ENCODE measurements at regions of chr4 and their contacts with region 1.

Region 1: DNA sequence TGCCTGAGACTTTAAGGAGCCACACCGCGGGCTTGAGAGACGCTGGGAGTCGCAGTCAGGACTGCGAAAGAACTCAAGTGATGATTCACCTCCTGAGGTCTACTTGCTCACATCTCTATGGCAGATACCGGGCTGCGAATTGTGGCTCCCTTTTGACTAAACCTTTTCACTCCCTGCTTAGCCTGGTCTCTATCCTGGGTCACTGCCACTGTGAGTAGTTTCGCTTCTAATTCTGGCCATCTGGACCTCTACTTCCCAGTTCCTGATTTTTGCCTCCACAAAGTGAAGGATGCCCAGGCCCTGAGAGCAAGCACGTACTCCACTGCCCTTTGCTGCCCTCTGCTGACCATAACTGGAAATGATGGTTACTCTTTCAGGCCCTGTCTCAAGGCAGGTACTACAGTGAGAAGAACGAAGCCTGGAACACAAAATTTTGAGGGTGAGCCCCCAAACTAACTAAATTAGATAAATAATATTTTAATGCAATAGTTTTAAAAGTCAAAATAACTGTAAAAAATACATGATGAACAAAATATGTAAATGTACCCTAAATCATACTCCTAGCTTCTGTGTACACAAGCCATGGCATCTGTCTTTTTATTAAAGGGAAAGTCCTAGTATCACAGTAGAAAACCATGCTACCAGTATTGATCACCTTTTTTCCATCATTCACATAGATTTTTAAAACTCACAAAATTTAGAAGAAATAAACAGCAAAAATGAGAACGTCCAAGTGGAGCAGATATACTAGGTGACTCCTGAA is 16.7 kb downstream of the MAD2L1 start:
- DNase-seq: peak; percentile 47 to 85
- ATAC-seq: peak; percentile 94 to 99 (median 99)
- H3K4me3 ChIP-seq: no peak overlapping the region
- H3K4me3 Mint-ChIP-seq: peak overlapping the region; percentile 58
- H3K27ac ChIP-seq: no peak overlapping the region
- H3K27ac Mint-ChIP-seq: peak overlapping the region in 1 of 2 donors; percentile 65
- H3K4me1 ChIP-seq: peaks cover 5% of the 10 kb centered on the region
- H3K4me1 Mint-ChIP-seq: peaks cover 5% of the 10 kb centered on the region in 2 donors
- H3K27me3 ChIP-seq: no peaks in the 10 kb centered on the region
- H3K27me3 Mint-ChIP-seq: no peaks in the 10 kb centered on the region
- CTCF ChIP-seq: peak; percentile 91

Region 2: DNA sequence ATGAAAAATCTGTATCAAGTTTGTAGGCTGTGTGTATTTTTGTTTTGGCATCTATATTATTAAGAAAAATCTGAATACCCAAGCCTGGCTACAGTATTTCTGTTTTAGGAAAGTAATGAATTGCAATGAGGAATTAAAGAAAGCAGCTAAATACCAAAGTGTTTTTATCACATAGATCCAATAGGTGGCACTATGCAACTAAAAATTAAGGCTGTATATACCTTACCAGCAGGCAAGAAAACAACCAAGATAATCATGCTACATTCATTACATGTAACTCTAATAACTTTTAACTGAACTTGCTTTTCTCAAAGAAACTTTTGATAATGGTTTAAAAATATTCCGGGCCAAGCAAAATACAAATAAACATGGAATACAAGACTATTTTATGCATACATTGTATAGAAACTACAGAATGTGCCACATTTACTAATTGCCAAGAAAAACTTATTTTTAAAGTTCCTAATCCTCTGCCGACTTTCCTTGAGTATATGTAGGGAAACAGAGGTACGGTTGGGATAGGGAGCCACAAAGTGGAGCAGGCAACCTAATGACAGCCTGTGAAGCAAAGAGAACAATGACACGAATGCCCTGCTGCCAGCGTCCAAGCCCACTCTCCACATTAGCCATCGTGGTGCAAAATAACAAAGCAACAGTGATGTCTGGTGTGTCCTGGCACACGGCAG is 1277.7 kb before region 1 on chr4:
- intact Hi-C with region 1: loop called (anchors 2 kb)
- DNase-seq: peak in 1 of 2 donors; percentile 66
- ATAC-seq: peak; percentile 69 to 74 (median 74)
- H3K4me3 ChIP-seq: no peak overlapping the region
- H3K4me3 Mint-ChIP-seq: no peak overlapping the region
- H3K27ac ChIP-seq: no peak overlapping the region
- H3K27ac Mint-ChIP-seq: no peak overlapping the region
- H3K4me1 ChIP-seq: no peaks in the 10 kb centered on the region
- H3K4me1 Mint-ChIP-seq: no peaks in the 10 kb centered on the region
- H3K27me3 ChIP-seq: no peaks in the 10 kb centered on the region
- H3K27me3 Mint-ChIP-seq: no peaks in the 10 kb centered on the region
- CTCF ChIP-seq: peak; percentile 70

Region 3: GRCh38 chr4:118981839-118982381 is 1068.0 kb before region 1 on chr4:
- intact Hi-C with region 1: loop called (anchors 1 kb)
- DNase-seq: peak in 1 of 2 donors; percentile 70
- ATAC-seq: peak; percentile 72 to 85 (median 76)
- H3K4me3 ChIP-seq: no peak overlapping the region
- H3K4me3 Mint-ChIP-seq: no peak overlapping the region
- H3K27ac ChIP-seq: no peak overlapping the region
- H3K27ac Mint-ChIP-seq: no peak overlapping the region
- H3K4me1 ChIP-seq: no peaks in the 10 kb centered on the region
- H3K4me1 Mint-ChIP-seq: no peaks in the 10 kb centered on the region
- H3K27me3 ChIP-seq: no peaks in the 10 kb centered on the region
- H3K27me3 Mint-ChIP-seq: peaks cover 11 to 13% of the 10 kb centered on the region in 2 donors
- CTCF ChIP-seq: peak; percentile 64

Region 4: DNA sequence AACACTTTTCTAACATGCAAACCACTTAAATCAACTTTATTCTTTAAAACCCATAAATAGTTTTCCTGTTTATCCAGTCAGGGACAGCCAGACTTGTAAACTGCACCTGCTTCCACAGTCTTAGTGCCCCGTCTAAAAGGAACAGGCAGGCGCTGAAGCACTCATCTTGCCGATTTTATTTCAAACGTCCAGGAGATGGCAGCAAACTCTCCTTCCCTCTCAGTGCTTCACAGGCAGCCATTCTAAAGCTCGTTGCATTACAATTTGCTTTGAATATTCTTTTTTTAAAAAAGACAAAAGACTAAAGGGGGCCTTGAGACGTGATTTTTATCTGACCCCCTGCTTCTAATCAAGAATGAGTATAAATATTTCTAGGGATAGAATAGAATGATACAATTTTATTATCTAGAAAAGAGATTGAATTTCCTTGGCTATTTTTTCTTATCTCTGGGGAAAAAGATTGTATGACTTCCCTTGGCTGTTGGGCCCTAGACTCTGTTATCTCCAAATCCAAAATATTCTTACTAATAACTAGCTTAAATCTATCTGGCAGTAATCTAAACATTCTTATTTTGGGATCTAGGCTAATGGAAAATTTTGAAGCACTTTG is 1007.9 kb before region 1 on chr4:
- intact Hi-C with region 1: loop called (anchors 10 kb)
- DNase-seq: peak in 1 of 2 donors; percentile 85
- ATAC-seq: peak; percentile 80 to 89 (median 88)
- H3K4me3 ChIP-seq: no peak overlapping the region
- H3K4me3 Mint-ChIP-seq: no peak overlapping the region
- H3K27ac ChIP-seq: no peak overlapping the region
- H3K27ac Mint-ChIP-seq: no peak overlapping the region
- H3K4me1 ChIP-seq: peaks cover 3% of the 10 kb centered on the region
- H3K4me1 Mint-ChIP-seq: no peaks in the 10 kb centered on the region
- H3K27me3 ChIP-seq: no peaks in the 10 kb centered on the region
- H3K27me3 Mint-ChIP-seq: peaks cover 0 to 2% of the 10 kb centered on the region in 2 donors
- CTCF ChIP-seq: peak; percentile 71

Region 5: GRCh38 chr4:119628308-119629141 is 421.4 kb before region 1 on chr4 and contains the start of gene PDE5A:
- intact Hi-C with region 1: loop called (anchors 5 kb)
- DNase-seq: peak; percentile 59 to 84
- ATAC-seq: peak; percentile 84 to 91 (median 85)
- H3K4me3 ChIP-seq: peak within 1 kb of the TSS; percentile 50
- H3K4me3 Mint-ChIP-seq: peak within 1 kb of the TSS; percentile 83
- H3K27ac ChIP-seq: peak within 1 kb of the TSS; percentile 13
- H3K27ac Mint-ChIP-seq: peak within 1 kb of the TSS in 1 of 2 donors; percentile 72
- H3K4me1 ChIP-seq: peaks cover 23% of the 10 kb centered on the region
- H3K4me1 Mint-ChIP-seq: peaks cover 15 to 26% of the 10 kb centered on the region in 2 donors
- H3K27me3 ChIP-seq: peaks cover 16% of the 10 kb centered on the region
- H3K27me3 Mint-ChIP-seq: peaks cover 32 to 35% of the 10 kb centered on the region in 2 donors
- CTCF ChIP-seq: peak; percentile 71
- total RNA-seq, gene PDE5A: 2.1 to 4.0 (median 2.5) TPM

Region 6: GRCh38 chr4:120277391-120277790 is 227.5 kb after region 1 on chr4:
- intact Hi-C with region 1: no loop called
- DNase-seq: no peak
- ATAC-seq: no peak
- H3K4me3 ChIP-seq: no peak overlapping the region
- H3K4me3 Mint-ChIP-seq: no peak overlapping the region
- H3K27ac ChIP-seq: no peak overlapping the region
- H3K27ac Mint-ChIP-seq: no peak overlapping the region
- H3K4me1 ChIP-seq: no peaks in the 10 kb centered on the region
- H3K4me1 Mint-ChIP-seq: no peaks in the 10 kb centered on the region
- H3K27me3 ChIP-seq: no peaks in the 10 kb centered on the region
- H3K27me3 Mint-ChIP-seq: no peaks in the 10 kb centered on the region
- CTCF ChIP-seq: no peak